Common myeloid progenitor, CD34-positive (primary cell): ENCODE measurements at regions of chr7 and their contacts with region 1.

Region 1: GRCh38 chr7:37208528-37208927 is 240.1 kb downstream of the ELMO1 start:
- DNase-seq: peak; percentile 59 to 83 (median 82)
- H3K4me3 ChIP-seq: no peak overlapping the region
- H3K27ac ChIP-seq: no peak overlapping the region
- H3K4me1 ChIP-seq: peaks cover 3 to 26% (median 19%) of the 10 kb centered on the region in 4 experiments
- H3K27me3 ChIP-seq: no peaks in the 10 kb centered on the region

Region 2: DNA sequence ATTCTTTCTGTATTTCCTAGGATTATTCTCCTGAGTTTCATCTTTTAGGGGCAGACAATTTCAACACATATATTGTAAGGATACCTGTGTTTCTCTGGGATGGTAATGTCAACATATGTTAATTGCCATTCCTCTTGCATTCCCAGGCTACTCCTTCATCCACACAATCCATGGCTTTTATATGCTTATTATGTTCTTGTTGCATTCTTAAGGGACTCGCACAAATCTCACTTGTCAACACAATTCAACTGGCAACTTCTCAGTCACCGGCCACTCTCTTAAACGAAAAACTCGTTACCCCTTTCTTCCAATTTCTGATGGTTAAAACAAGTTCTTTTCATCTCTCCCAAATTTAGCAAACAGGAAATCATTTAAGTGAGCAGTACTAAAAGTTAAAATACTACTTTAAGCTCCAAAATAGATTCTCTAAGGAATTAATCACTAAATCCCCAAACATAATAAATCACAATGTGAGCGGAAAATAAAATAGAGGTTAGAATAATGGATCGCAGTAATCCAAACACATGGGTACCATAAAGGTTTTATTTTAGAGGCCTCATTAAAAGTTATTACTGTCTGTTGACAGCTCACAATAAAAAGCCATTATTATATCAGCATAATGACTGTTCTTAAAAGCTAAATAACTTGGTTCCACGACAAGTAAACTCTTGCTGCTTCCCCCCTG is 16.9 kb after region 1 on chr7:
- CTCF ChIA-PET with region 1: interaction called, 10 read pairs
- POLR2A ChIA-PET with region 1: interaction called, 5 read pairs
- DNase-seq: no peak
- H3K4me3 ChIP-seq: no peak overlapping the region
- H3K27ac ChIP-seq: no peak overlapping the region
- H3K4me1 ChIP-seq: peaks cover 3 to 36% (median 10%) of the 10 kb centered on the region in 4 experiments
- H3K27me3 ChIP-seq: no peaks in the 10 kb centered on the region

Region 3: DNA sequence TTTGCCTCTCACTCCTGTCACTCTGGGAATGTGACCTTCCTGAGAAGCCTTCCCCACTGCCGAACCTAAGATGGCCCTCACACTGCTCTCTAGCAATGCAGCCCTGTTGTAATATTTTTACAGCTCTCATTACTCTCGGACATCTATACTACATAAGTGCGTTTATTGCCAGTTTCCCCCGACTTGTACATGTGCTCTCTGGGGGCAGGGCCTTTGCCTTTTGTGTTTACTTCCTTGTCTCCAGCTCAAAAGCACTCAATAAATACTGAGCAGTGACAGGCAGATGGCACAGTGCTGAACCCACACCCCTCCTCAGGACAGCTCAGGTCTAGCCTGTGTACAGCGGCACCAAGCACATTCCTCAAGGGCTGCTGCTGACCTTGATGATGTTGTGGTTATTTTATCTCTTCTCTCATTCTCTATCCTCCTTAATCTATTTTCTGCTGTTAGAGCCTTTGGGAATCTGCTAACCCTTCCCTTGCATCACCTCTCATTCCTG is 308.1 kb after region 1 on chr7:
- CTCF ChIA-PET with region 1: no interaction called
- POLR2A ChIA-PET with region 1: no interaction called
- DNase-seq: peak in 1 of 3 donors; percentile 15
- H3K4me3 ChIP-seq: no peak overlapping the region
- H3K27ac ChIP-seq: no peak overlapping the region
- H3K4me1 ChIP-seq: no peaks in the 10 kb centered on the region
- H3K27me3 ChIP-seq: no peaks in the 10 kb centered on the region